ENCODE measurements at regions of chr13 and their contacts with region 1.

Region 1: DNA sequence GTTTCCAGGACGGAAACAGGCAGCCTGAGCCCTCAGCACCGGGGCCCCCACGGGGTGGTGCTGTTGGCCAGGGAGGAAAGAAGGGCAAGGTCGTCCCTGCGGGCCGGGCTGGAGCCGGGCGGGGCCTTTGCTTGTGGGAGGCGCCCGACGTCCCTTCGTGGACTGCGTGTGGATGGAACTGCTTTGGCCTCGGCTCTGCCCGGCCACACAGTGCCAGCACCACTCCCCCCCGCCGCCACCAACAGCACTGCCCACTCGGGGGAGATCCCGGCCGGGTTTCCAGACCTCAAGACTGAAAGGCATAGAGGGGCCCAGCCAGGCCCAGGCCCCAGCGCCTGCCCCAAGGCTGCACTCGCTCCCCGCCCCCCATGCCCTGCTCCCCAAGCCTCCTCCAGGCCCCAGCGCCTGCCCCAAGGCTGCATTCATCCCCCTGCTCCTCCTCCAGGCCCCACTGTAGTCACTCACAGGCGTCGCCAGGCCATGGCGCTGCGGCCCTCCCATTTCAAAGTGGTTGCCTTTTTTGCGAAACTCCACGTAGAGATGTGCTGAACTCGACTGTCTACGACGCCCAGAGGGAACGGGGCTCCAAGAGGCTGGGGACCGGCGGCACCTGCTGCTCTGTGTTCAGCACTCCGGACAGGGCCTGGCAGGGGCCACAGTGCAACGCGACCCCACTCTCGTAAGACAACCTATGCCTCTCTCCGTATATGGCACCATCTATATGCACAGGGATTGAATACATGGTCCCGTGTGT is 22.5 kb downstream of the C13orf46 start:
- DNase-seq: peak; percentile 84 to 92 (median 88)
- ATAC-seq: peak; percentile 82 to 97 (median 94)
- H3K4me3 ChIP-seq: peak overlapping the region in 6 of 12 donors; percentile 8 to 35 (median 24)
- H3K27ac ChIP-seq: peak overlapping the region in 1 of 12 donors; percentile 13
- H3K4me1 ChIP-seq: peaks cover 0 to 20% (median 10%) of the 10 kb centered on the region in 12 donors
- H3K27me3 ChIP-seq: no peaks in the 10 kb centered on the region
- CTCF ChIP-seq: peak; percentile 71 to 93 (median 86)
- POLR2A ChIP-seq: no peak

Region 2: DNA sequence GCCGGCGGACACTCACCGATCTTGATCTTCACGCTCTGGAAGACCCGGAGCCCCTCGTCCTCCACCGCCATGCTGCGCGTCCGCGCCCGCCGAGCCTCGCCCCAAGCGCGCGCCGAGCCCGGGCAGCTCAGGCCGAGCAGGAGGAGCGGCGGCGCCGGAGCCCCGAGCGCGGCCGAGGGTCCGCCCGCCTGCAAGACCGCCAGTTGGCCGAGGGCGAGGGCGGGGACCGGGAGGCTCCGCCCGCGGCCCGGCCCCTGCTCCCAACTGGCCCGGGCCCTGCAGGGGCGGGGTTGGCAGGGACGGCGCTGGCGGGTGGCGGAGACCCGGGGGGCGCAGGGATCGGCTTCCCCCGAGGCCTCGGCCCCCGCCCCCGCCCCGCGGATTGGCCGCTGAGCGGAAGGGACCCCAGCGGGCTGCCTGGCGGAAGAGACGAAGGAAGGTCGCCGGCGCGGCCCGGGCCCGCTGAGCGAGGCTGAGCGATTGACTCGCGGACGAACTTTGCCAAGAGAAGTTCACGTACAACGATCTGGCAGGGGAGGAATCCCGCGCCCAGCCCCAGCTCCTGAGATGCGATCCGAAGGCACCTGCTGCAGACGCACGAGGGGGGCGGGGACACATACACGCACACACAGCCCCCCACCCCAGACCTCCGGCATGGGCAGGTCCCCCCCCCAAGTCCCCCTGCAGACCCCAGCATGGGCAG is 181.1 kb after region 1 on chr13 and contains the start of gene RASA3:
- intact Hi-C with region 1: loop called in 1 of 10 experiments (anchors 2 kb)
- DNase-seq: peak; percentile 84 to 91 (median 85)
- ATAC-seq: peak; percentile 60 to 92 (median 85)
- H3K4me3 ChIP-seq: peak within 1 kb of the TSS; percentile 71 to 99 (median 88)
- H3K27ac ChIP-seq: peak within 1 kb of the TSS; percentile 39 to 94 (median 77)
- H3K4me1 ChIP-seq: peaks cover 0 to 53% (median 39%) of the 10 kb centered on the region in 12 donors
- H3K27me3 ChIP-seq: no peaks in the 10 kb centered on the region
- CTCF ChIP-seq: no peak
- POLR2A ChIP-seq: peak in 1 of 2 donors; percentile 67
- total RNA-seq, gene RASA3: 7.2 to 24.2 (median 10.5) TPM

Region 3: DNA sequence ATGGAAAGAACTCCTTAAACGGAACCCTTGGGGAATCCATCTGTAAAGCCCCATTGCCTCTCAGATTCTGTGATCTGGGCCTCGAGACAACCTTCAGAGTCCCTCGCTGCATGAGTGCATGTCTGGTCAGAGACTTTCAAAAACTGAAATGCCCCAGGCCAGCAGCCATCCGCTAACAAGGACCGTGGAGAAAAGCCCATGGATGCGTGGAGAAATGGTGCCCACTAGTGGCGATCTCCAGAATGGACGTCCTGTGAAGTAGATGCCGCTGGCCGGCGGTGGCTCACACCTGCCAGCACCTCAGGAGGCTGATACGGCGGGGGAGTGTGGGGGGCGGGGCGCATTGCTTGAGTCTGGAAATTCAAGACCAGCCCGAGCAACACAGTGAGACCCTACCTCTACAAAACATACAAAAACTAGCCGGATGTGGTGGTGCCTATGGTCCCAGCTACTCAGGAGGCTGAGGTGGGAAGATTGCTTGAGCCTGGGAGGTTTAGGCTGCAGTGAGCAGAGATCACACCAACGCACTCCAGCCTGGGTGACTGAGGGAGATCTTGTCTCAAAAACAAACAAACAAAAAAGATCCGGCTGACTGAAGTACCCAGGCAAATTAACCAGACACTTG is 275.4 kb after region 1 on chr13:
- intact Hi-C with region 1: loop called (anchors 1 to 2 kb)
- DNase-seq: peak; percentile 78 to 88 (median 82)
- ATAC-seq: peak; percentile 64 to 92 (median 86)
- H3K4me3 ChIP-seq: no peak overlapping the region
- H3K27ac ChIP-seq: no peak overlapping the region
- H3K4me1 ChIP-seq: peaks cover 0 to 35% (median 3%) of the 10 kb centered on the region in 12 donors
- H3K27me3 ChIP-seq: peaks cover 0 to 36% (median 9%) of the 10 kb centered on the region in 9 donors
- CTCF ChIP-seq: peak; percentile 84 to 96 (median 90)
- POLR2A ChIP-seq: no peak